Endothelial cell of umbilical vein (primary cell): ENCODE measurements at regions of chr5 and their contacts with region 1.

Region 1: GRCh38 chr5:169970911-169971765 is 9.2 kb downstream of the INSYN2B start:
- DNase-seq: peak; percentile 85
- H3K4me3 ChIP-seq: peak overlapping the region in 1 of 3 experiments; percentile 12
- H3K27ac ChIP-seq: peak overlapping the region; percentile 97
- H3K4me1 ChIP-seq: peaks cover 60% of the 10 kb centered on the region
- H3K27me3 ChIP-seq: no peaks in the 10 kb centered on the region
- CTCF ChIP-seq: no peak
- POLR2A ChIP-seq: peak; percentile 77

Region 2: GRCh38 chr5:168579488-168580226 is 1391.5 kb before region 1 on chr5:
- CTCF ChIA-PET with region 1: no interaction called
- POLR2A ChIA-PET with region 1: no interaction called
- dilution Hi-C with region 1: no loop called
- intact Hi-C with region 1: loop called (anchors 5 kb)
- DNase-seq: peak; percentile 99
- H3K4me3 ChIP-seq: peak overlapping the region in 2 of 3 experiments; percentile 80 to 100
- H3K27ac ChIP-seq: peak overlapping the region; percentile 92
- H3K4me1 ChIP-seq: peaks cover 24% of the 10 kb centered on the region
- H3K27me3 ChIP-seq: no peaks in the 10 kb centered on the region
- CTCF ChIP-seq: no peak
- POLR2A ChIP-seq: peak; percentile 92

Region 3: GRCh38 chr5:169695919-169696490 is 275.1 kb before region 1 on chr5:
- CTCF ChIA-PET with region 1: interaction called, 7 read pairs
- POLR2A ChIA-PET with region 1: interaction called, 3 read pairs
- dilution Hi-C with region 1: no loop called
- intact Hi-C with region 1: loop called (anchors 1 kb)
- DNase-seq: peak; percentile 96
- H3K4me3 ChIP-seq: no peak overlapping the region
- H3K27ac ChIP-seq: peak overlapping the region; percentile 98
- H3K4me1 ChIP-seq: peaks cover 30% of the 10 kb centered on the region
- H3K27me3 ChIP-seq: no peaks in the 10 kb centered on the region
- CTCF ChIP-seq: no peak
- POLR2A ChIP-seq: peak; percentile 74

Region 4: GRCh38 chr5:169945831-169946261 is 25.3 kb before region 1 on chr5:
- CTCF ChIA-PET with region 1: interaction called, 5 read pairs
- POLR2A ChIA-PET with region 1: no interaction called
- dilution Hi-C with region 1: no loop called
- intact Hi-C with region 1: loop called (anchors 1 kb)
- DNase-seq: peak; percentile 61
- H3K4me3 ChIP-seq: no peak overlapping the region
- H3K27ac ChIP-seq: peak overlapping the region; percentile 48
- H3K4me1 ChIP-seq: peaks cover 12% of the 10 kb centered on the region
- H3K27me3 ChIP-seq: no peaks in the 10 kb centered on the region
- CTCF ChIP-seq: no peak
- POLR2A ChIP-seq: no peak

Region 5: GRCh38 chr5:170006021-170006420 is 34.9 kb after region 1 on chr5:
- CTCF ChIA-PET with region 1: no interaction called
- POLR2A ChIA-PET with region 1: no interaction called
- dilution Hi-C with region 1: no loop called
- intact Hi-C with region 1: no loop called
- DNase-seq: no peak
- H3K4me3 ChIP-seq: no peak overlapping the region
- H3K27ac ChIP-seq: no peak overlapping the region
- H3K4me1 ChIP-seq: no peaks in the 10 kb centered on the region
- H3K27me3 ChIP-seq: peaks cover 0 to 11% of the 10 kb centered on the region in 2 experiments
- CTCF ChIP-seq: no peak
- POLR2A ChIP-seq: no peak

Region 6: GRCh38 chr5:170865622-170866021 is 894.5 kb after region 1 on chr5:
- CTCF ChIA-PET with region 1: no interaction called
- POLR2A ChIA-PET with region 1: no interaction called
- dilution Hi-C with region 1: no loop called
- intact Hi-C with region 1: no loop called
- DNase-seq: no peak
- H3K4me3 ChIP-seq: no peak overlapping the region
- H3K27ac ChIP-seq: no peak overlapping the region
- H3K4me1 ChIP-seq: peaks cover 5% of the 10 kb centered on the region
- H3K27me3 ChIP-seq: no peaks in the 10 kb centered on the region
- CTCF ChIP-seq: no peak
- POLR2A ChIP-seq: no peak